Activated CD4-positive, alpha-beta T cell treated with anti-CD3 and anti-CD28 coated beads, Interleukin-2, amount 10 ng/mL, durations not matched to agents 7 days and 5 days (primary cell): ENCODE measurements at regions of chr11 and their contacts with region 1.

Region 1: GRCh38 chr11:13318498-13319295 is 41.1 kb downstream of the BMAL1 start:
- DNase-seq: no peak
- H3K4me3 Mint-ChIP-seq: peak overlapping the region; percentile 22
- H3K27ac Mint-ChIP-seq: peak overlapping the region; percentile 54
- H3K4me1 Mint-ChIP-seq: peaks cover 40% of the 10 kb centered on the region
- H3K27me3 Mint-ChIP-seq: no peaks in the 10 kb centered on the region

Region 2: GRCh38 chr11:13335319-13335718 is 16.6 kb after region 1 on chr11:
- CTCF ChIA-PET with region 1: interaction called, 11 read pairs
- POLR2A ChIA-PET with region 1: no interaction called
- DNase-seq: peak; percentile 79
- H3K4me3 Mint-ChIP-seq: no peak overlapping the region
- H3K27ac Mint-ChIP-seq: no peak overlapping the region
- H3K4me1 Mint-ChIP-seq: peaks cover 65% of the 10 kb centered on the region
- H3K27me3 Mint-ChIP-seq: no peaks in the 10 kb centered on the region